Activated T-helper 2 cell treated with anti-CD3 and anti-CD28 coated beads, Interferon-gamma antibody, Interleukin-2, Interleukin-4, amounts not matched to agents 10 μg/mL and 5 μg/mL and 100 μg/mL, durations not matched to agents 14 hours and 24 hours and 36 hours (primary cell): ENCODE measurements at regions of chr15 and their contacts with region 1.

Region 1: DNA sequence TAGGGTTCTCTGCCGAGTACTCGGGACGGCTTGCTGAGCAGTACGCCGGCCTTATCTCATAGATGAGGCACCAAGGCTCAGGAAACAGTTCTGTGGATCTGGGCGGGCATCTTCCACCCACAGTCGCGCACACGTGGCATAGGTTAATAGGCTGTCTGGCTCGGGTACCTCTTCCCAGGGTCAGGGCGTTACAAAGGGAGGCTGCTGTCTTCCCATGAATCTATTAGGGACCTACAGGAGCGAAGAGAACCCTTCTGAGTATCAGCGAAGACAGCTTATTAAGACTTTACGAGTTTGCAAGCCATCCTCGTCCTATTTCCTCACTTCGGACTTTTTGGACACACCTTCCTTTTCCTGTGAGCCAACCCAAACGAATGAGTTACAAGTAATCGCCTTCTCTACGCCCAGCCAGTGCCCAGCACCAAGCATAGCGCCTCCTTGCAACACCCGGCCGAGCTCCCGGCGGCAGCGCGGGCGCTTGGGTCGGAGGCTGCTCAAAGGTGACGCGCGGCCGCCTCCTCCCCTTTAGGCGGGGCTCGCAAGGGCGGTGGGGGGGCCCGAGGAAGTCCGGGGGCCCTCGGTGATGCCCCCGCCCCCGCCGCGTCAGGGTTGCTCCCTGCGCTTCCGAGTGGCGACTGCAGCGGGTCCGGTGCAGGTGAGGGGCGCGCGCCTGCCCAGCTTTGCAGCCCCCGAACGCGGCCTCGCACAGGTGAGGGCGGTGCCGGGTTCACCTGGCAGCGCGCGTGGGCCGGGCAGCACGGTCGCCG is at the start of gene MCTP2:
- DNase-seq: peak; percentile 86
- H3K4me3 Mint-ChIP-seq: peak within 1 kb of the TSS; percentile 91
- H3K27ac Mint-ChIP-seq: peak within 1 kb of the TSS; percentile 95
- H3K4me1 Mint-ChIP-seq: peaks cover 79% of the 10 kb centered on the region
- H3K27me3 Mint-ChIP-seq: no peaks in the 10 kb centered on the region
- total RNA-seq, gene MCTP2: 91.5 and 93.2 TPM in 2 replicates

Region 2: DNA sequence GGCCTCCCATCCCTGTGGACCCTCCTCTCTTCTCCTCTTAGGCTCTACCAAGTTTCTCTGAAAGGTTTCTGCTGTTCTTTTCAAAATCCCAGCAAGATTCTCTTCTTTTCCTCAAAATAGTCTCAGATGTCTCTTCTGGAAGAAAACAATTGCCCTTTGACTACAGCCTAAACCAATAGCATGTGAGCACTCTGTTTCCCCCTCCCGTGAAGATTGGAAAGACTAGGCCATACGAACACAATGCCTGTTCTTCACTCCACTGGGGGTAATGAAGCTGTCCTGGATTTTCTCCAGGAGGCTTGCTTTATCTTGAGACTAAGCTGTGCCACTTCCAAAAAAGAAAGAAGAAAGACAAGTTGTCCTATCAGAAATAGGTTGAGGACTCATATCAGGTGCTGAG is 178.4 kb before region 1 on chr15:
- intact Hi-C with region 1: no loop called
- DNase-seq: no peak
- H3K4me3 Mint-ChIP-seq: no peak overlapping the region
- H3K27ac Mint-ChIP-seq: no peak overlapping the region
- H3K4me1 Mint-ChIP-seq: no peaks in the 10 kb centered on the region
- H3K27me3 Mint-ChIP-seq: peaks cover 5% of the 10 kb centered on the region

Region 3: DNA sequence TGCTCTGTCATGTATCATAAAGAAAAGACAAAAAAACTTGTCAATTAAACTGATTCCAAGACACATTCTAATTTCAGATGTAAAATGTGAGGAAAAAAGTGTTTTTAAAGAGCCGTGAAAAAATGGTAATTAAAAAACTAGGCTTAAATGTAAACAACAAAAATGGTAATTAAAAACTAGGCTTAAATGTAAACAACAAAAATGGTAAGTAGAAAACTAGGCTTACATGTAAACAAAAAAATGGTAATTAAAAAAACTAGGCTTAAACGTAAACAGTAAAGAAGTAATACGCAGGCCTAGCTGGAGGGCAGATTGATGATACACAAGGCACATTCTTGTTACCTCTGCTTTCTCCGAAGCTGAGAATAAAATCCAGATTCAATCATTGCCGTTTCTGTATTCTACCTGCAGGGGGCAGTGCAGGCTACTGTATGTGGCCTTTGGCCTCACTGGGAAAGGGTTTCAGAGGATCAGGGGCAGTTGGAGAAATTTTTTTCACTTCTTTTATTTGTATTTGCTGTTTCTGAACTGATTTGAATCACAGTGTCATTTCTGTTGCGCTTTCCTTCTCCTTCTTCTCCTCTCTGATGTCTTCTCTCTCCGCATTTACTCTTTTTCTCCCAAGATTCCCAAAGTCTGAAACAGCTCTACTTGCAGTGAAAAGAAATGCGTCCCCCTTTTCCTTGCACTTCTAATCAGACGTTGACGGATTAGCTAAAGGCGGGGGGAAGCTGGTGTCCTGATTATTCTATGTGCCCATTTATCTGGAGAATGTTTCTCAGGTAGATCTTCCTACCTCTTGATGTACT is 66.9 kb before region 1 on chr15:
- intact Hi-C with region 1: loop called (anchors 1 kb)
- DNase-seq: peak; percentile 45
- H3K4me3 Mint-ChIP-seq: no peak overlapping the region
- H3K27ac Mint-ChIP-seq: no peak overlapping the region
- H3K4me1 Mint-ChIP-seq: peaks cover 15% of the 10 kb centered on the region
- H3K27me3 Mint-ChIP-seq: peaks cover 22% of the 10 kb centered on the region

Region 4: GRCh38 chr15:94174399-94174802 is 56.7 kb before region 1 on chr15:
- intact Hi-C with region 1: loop called (anchors 1 kb)
- DNase-seq: no peak
- H3K4me3 Mint-ChIP-seq: peak overlapping the region; percentile 0
- H3K27ac Mint-ChIP-seq: peak overlapping the region; percentile 28
- H3K4me1 Mint-ChIP-seq: peaks cover 54% of the 10 kb centered on the region
- H3K27me3 Mint-ChIP-seq: peaks cover 1% of the 10 kb centered on the region

Region 5: GRCh38 chr15:94206463-94207167 is 24.5 kb before region 1 on chr15:
- intact Hi-C with region 1: loop called (anchors 1 kb)
- DNase-seq: peak; percentile 61
- H3K4me3 Mint-ChIP-seq: peak overlapping the region; percentile 60
- H3K27ac Mint-ChIP-seq: peak overlapping the region; percentile 96
- H3K4me1 Mint-ChIP-seq: peaks cover 40% of the 10 kb centered on the region
- H3K27me3 Mint-ChIP-seq: no peaks in the 10 kb centered on the region

Region 6: GRCh38 chr15:94272251-94272898 is 41.2 kb after region 1 on chr15:
- intact Hi-C with region 1: loop called (anchors 1 kb)
- DNase-seq: no peak
- H3K4me3 Mint-ChIP-seq: no peak overlapping the region
- H3K27ac Mint-ChIP-seq: no peak overlapping the region
- H3K4me1 Mint-ChIP-seq: peaks cover 31% of the 10 kb centered on the region
- H3K27me3 Mint-ChIP-seq: no peaks in the 10 kb centered on the region

Region 7: GRCh38 chr15:94287794-94288246 is 56.7 kb after region 1 on chr15:
- intact Hi-C with region 1: loop called (anchors 5 kb)
- DNase-seq: peak; percentile 60
- H3K4me3 Mint-ChIP-seq: peak overlapping the region; percentile 83
- H3K27ac Mint-ChIP-seq: peak overlapping the region; percentile 94
- H3K4me1 Mint-ChIP-seq: peaks cover 67% of the 10 kb centered on the region
- H3K27me3 Mint-ChIP-seq: no peaks in the 10 kb centered on the region

Region 8: DNA sequence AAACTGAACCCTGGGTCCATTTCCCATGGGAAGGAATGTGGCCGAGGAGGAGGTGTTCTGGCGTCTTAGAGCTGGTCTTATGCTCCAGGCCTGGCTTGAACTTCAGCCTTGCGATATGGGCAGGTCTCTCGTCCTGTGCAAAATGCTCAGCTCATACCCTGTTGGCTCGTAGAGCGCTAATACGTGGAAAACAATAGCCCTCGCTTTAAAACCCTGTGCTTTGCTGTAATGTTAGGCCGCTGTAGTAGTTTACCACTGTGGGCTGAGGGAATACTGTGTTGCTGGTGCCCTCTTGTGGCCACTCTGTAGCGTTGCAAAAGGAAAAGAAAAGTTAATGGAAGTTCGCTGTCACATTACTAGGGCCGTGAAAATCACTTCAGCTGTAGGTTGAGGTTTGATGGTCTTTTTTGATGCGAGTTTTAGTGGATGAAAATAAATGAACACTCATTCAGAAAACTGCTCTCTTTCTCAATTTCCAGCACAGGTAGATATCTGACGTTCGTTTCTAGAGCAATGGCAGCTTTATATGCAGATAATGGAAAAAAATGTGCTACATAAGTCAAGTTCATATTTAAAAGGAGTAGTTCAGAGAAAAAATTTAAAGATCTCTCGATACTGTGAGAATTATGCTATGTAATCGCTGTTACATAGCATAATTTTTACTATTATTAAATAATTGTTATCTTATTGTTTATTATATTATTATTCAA is 93.1 kb after region 1 on chr15:
- intact Hi-C with region 1: loop called (anchors 1 kb)
- DNase-seq: peak; percentile 44
- H3K4me3 Mint-ChIP-seq: no peak overlapping the region
- H3K27ac Mint-ChIP-seq: peak overlapping the region; percentile 5
- H3K4me1 Mint-ChIP-seq: peaks cover 30% of the 10 kb centered on the region
- H3K27me3 Mint-ChIP-seq: no peaks in the 10 kb centered on the region

Region 9: GRCh38 chr15:94441760-94442159 is 210.6 kb after region 1 on chr15:
- intact Hi-C with region 1: no loop called
- DNase-seq: no peak
- H3K4me3 Mint-ChIP-seq: no peak overlapping the region
- H3K27ac Mint-ChIP-seq: no peak overlapping the region
- H3K4me1 Mint-ChIP-seq: no peaks in the 10 kb centered on the region
- H3K27me3 Mint-ChIP-seq: no peaks in the 10 kb centered on the region